ENCODE measurements at regions of chr11 and their contacts with region 1.

Region 1: GRCh38 chr11:124644426-124645280 is 22.0 kb downstream of the TBRG1 start:
- DNase-seq: peak; percentile 77 to 79
- H3K4me3 ChIP-seq: 0 out of 2 replicates have a peak overlapping the region, but pooled peaks have one; percentile 1
- H3K4me3 Mint-ChIP-seq: peak overlapping the region; percentile 54
- H3K27ac Mint-ChIP-seq: no peak overlapping the region
- H3K4me1 ChIP-seq: no peaks in the 10 kb centered on the region
- H3K4me1 Mint-ChIP-seq: no peaks in the 10 kb centered on the region
- H3K27me3 ChIP-seq: no peaks in the 10 kb centered on the region
- H3K27me3 Mint-ChIP-seq: no peaks in the 10 kb centered on the region
- CTCF ChIP-seq: peak; percentile 92 to 99

Region 2: DNA sequence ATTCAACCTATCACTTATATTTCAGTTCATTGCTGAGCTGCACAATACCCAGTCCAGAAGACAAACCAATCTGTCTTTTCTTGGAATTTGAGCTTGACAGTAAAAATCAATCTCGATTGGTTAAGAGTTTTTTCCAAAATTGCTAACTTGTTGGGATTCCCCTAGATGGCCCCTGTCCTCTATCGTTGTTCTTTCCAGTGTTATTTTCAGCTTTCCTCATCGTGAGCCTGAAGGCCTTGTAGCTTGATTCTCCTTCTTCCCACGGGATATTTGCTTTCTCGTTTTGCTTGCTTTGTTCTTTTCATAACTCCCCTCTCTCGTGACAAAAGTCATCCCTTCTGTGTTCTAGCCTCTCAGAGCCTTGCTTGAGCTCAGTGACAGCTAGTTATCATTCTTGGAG is 202.2 kb before region 1 on chr11:
- CTCF ChIA-PET with region 1: no interaction called
- POLR2A ChIA-PET with region 1: no interaction called
- intact Hi-C with region 1: no loop called
- DNase-seq: no peak
- H3K4me3 ChIP-seq: no peak overlapping the region
- H3K4me3 Mint-ChIP-seq: no peak overlapping the region
- H3K27ac Mint-ChIP-seq: no peak overlapping the region
- H3K4me1 ChIP-seq: no peaks in the 10 kb centered on the region
- H3K4me1 Mint-ChIP-seq: no peaks in the 10 kb centered on the region
- H3K27me3 ChIP-seq: 0 out of 2 replicates have a peak, but pooled peaks cover 1% of the 10 kb centered on the region
- H3K27me3 Mint-ChIP-seq: peaks cover 33% of the 10 kb centered on the region
- CTCF ChIP-seq: no peak

Region 3: DNA sequence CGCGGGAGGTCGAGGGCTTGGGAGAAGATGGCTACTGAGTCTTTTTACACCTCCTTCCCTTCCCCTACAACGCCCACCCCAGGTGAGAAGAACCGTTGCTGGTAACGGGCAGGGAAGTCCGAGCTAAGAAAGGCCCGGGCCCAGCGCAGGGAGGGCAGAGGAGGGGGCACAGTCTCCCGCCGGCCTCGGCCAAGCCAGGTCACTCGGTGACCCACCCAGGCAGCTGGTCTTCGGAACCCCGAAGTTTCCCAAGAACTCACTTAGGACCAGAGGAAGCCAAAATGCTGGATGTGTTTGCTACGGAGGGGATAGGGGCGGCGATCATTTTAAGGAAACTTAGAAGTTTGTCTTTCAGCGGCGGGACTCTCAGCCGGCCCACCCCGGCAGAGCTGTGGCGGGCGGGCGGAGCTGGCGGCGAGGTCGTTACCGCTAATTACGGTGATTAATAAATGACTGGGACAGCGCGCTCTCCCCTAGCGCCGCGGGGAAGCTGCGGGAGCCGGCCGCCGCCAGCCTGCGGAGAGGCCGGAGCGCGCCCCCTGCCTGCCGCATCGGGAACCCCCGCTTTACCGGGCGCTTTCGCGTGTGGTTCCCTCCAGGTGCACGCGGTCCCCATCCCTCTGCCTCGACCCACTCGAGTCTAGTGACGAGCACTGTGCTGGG is 221.4 kb after region 1 on chr11:
- CTCF ChIA-PET with region 1: interaction called, 12 read pairs
- POLR2A ChIA-PET with region 1: no interaction called
- intact Hi-C with region 1: loop called (anchors 1 kb)
- DNase-seq: peak; percentile 58 to 83
- H3K4me3 ChIP-seq: peak overlapping the region; percentile 19
- H3K4me3 Mint-ChIP-seq: peak overlapping the region; percentile 32
- H3K27ac Mint-ChIP-seq: no peak overlapping the region
- H3K4me1 ChIP-seq: peaks cover 22% of the 10 kb centered on the region
- H3K4me1 Mint-ChIP-seq: peaks cover 7% of the 10 kb centered on the region
- H3K27me3 ChIP-seq: peaks cover 16% of the 10 kb centered on the region
- H3K27me3 Mint-ChIP-seq: peaks cover 48% of the 10 kb centered on the region
- CTCF ChIP-seq: peak; percentile 91 to 98

Measured in Caco-2 (cell line).